ENCODE measurements at regions of chr2 and their contacts with region 1.

Region 1: DNA sequence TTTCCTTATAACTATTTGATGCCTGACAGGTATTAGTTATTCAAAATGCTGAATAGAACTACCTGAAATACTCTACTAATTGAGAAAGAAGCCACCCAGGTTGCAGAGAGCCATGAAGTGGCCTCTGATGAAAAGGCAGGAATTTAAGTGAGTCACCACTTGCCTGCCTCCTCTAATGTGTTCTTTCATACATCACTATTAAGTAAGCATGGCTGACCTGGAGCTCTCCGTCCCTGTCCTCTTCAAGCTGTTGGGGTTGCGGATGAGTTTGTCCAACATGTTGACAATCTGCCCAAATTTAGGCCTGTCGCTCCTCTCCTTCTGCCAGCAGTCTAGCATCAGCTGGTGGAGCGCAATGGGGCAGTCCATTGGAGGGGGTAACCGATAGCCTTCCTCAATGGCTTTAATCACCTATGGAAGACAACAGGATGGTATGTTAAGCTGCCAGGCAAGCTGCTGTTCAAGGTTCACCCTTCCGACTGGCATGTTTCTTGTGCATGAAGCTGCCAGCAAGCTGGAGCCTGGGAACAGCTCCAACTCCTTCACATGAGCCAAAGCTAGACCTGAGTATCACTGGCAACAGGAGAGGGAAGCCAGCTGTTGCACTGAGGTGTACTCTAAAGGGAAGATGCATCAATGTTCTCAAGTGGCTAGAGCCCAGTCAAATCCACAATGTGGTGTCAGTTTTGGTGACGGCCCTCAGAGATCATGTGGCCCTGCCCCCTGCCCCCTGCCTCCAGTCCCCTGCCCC is 142.2 kb downstream of the EPHA4 start:
- DNase-seq: peak in 4 of 5 donors; percentile 28 to 65 (median 62)
- ATAC-seq: peak in 3 of 4 donors; percentile 69 to 87 (median 85)
- H3K4me3 ChIP-seq: no peak overlapping the region
- H3K27ac ChIP-seq: no peak overlapping the region
- H3K4me1 ChIP-seq: peaks cover 0 to 5% (median 0%) of the 10 kb centered on the region in 12 donors
- H3K27me3 ChIP-seq: no peaks in the 10 kb centered on the region
- CTCF ChIP-seq: no peak
- POLR2A ChIP-seq: no peak

Region 2: GRCh38 chr2:221060376-221060775 is 369.5 kb before region 1 on chr2:
- intact Hi-C with region 1: no loop called
- DNase-seq: no peak
- ATAC-seq: no peak
- H3K4me3 ChIP-seq: no peak overlapping the region
- H3K27ac ChIP-seq: no peak overlapping the region
- H3K4me1 ChIP-seq: peaks cover 0 to 4% (median 0%) of the 10 kb centered on the region in 12 donors
- H3K27me3 ChIP-seq: no peaks in the 10 kb centered on the region
- CTCF ChIP-seq: no peak
- POLR2A ChIP-seq: no peak

Region 3: DNA sequence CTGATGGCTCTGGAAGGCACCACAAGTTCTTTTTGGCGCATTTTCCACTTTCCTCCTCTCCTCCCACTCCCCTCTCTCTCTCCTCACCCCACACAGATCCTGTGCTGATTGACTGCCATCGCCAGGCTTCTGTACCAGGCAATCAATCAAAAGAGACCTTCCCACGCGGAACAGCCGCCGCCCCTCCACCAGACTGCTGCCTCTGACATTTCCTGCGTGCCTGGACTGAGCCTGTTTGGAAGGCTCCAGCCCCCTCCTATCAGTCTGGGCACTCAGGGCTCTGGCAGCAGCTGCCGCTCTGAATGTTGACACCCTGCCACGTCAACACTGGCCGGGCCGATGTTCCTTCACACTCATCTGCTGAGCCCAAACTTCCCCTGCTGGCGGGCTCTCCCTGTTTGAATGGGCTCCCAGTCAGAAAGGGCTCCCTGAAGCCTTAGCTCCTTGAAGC is 325.5 kb before region 1 on chr2:
- intact Hi-C with region 1: loop called in 1 of 10 experiments (anchors 10 kb)
- DNase-seq: peak; percentile 83 to 91 (median 86)
- ATAC-seq: peak; percentile 98 to 99 (median 98)
- H3K4me3 ChIP-seq: peak overlapping the region in 9 of 12 donors; percentile 4 to 25 (median 17)
- H3K27ac ChIP-seq: peak overlapping the region in 11 of 12 donors; percentile 9 to 72 (median 61)
- H3K4me1 ChIP-seq: peaks cover 0 to 28% (median 16%) of the 10 kb centered on the region in 12 donors
- H3K27me3 ChIP-seq: no peaks in the 10 kb centered on the region
- CTCF ChIP-seq: peak in 11 of 12 donors; percentile 8 to 44 (median 20)
- POLR2A ChIP-seq: no peak

Region 4: DNA sequence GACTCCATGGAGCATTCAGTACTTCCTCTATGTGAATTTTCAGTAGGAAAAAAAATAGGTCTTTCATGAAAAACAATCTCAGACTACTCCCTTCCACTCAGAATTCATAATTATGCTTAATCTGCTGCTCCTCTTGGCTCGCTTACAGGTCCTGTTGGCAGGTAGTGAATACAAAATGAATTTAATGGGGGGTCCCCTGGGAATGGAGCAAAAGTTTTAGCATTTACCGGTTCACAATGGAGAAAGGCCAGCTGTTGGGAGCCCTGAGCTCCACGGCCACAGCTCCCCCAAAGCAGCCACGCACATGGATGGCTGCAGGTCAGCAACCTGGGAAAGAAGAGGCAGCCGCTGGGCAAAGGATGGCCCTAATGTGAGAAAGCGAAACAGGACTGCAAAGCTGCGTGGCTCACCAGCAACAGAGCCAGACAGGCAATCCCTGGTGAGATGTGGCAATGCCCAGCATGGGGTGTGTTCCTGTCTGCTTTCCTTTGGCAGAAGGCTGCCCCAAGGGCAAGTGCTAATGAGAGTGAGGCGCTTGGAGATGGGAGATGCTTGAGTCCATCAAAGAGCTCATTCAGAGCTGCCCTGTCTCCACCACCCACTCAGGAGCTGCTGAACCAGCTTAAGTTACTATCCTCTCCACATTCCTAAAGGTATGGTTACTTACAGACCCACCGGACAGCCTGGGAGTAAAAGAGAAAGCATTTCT is 305.2 kb before region 1 on chr2:
- intact Hi-C with region 1: loop called in 1 of 10 experiments (anchors 10 kb)
- DNase-seq: peak in 3 of 5 donors; percentile 34 to 67 (median 55)
- ATAC-seq: peak; percentile 34 to 80 (median 48)
- H3K4me3 ChIP-seq: peak overlapping the region in 4 of 12 donors; percentile 3 to 26 (median 10)
- H3K27ac ChIP-seq: no peak overlapping the region
- H3K4me1 ChIP-seq: peaks cover 0 to 8% (median 1%) of the 10 kb centered on the region in 12 donors
- H3K27me3 ChIP-seq: no peaks in the 10 kb centered on the region
- CTCF ChIP-seq: no peak
- POLR2A ChIP-seq: no peak

Region 5: DNA sequence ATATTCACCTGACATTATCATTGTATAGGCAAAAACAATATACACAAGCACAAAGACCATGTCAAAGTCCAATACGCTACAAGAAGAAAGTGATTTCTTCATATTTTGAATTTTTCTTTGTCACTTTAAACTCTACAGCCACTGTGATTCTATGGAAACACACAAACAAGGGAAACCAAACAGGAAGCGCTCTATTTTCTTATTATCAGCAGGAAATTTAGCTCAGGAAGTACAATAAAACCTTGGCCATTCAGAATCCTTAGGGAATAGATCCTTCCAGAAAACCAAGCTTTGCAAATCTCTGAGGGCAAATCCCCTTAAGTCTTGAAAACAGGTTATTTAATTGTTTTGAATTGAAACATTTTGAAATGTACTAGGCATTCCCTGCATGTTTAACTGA is 194.0 kb before region 1 on chr2:
- intact Hi-C with region 1: loop called in 2 of 10 experiments (anchors 10 kb)
- DNase-seq: no peak
- ATAC-seq: peak in 2 of 4 donors; percentile 42 to 91
- H3K4me3 ChIP-seq: no peak overlapping the region
- H3K27ac ChIP-seq: peak overlapping the region in 10 of 12 donors; percentile 24 to 66 (median 54)
- H3K4me1 ChIP-seq: peaks cover 0 to 14% (median 0%) of the 10 kb centered on the region in 12 donors
- H3K27me3 ChIP-seq: no peaks in the 10 kb centered on the region
- CTCF ChIP-seq: no peak
- POLR2A ChIP-seq: no peak

Region 6: DNA sequence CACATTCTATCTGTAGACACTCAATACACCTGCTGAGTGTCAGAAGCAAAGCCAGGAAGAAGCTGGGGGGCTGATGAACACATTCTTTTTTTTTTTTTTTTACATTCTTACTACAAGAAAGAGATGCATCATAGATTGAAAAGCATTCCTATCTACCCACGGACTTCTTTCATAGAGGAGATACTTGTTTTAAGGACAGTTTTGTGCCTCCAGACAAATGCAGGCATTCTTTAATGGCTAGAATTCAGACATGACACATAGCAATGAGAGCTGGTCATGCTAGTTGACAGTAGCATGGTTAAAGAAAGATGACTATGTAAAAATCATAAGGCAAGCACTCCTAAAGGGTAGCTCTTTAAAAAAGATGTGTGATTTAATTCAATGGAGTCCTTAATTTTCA is 32.0 kb after region 1 on chr2:
- intact Hi-C with region 1: no loop called
- DNase-seq: no peak
- ATAC-seq: no peak
- H3K4me3 ChIP-seq: no peak overlapping the region
- H3K27ac ChIP-seq: no peak overlapping the region
- H3K4me1 ChIP-seq: peaks cover 0 to 25% (median 8%) of the 10 kb centered on the region in 12 donors
- H3K27me3 ChIP-seq: no peaks in the 10 kb centered on the region
- CTCF ChIP-seq: no peak
- POLR2A ChIP-seq: no peak

Measured in heart left ventricle (tissue), 16 donors.